ENCODE measurements at regions of chr3 and their contacts with region 1.

Region 1: DNA sequence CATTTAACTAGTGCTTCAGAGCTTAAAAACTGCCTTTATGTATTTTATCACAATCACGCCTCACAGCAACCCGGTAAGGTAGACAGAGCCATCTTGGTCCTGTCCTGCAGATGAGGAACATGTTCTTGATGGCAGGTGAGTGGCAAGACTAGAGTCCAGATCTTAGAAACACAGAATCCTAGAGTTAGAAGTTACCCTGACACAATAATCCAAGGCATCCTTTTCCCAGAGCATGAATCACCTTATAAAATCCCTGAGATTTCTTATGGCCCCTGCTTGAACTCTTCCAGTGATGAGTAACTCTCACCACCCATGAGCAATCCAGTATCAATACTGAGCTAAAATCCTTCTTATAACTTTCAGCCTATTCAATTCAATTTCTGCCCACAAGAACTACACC is 16.9 kb downstream of the POPDC2 start:
- DNase-seq: no peak
- CTCF ChIP-seq: no peak

Region 2: GRCh38 chr3:119437691-119438258 is 205.8 kb before region 1 on chr3:
- CTCF ChIA-PET with region 1: no interaction called
- POLR2A ChIA-PET with region 1: no interaction called
- DNase-seq: no peak
- CTCF ChIP-seq: no peak

Region 3: DNA sequence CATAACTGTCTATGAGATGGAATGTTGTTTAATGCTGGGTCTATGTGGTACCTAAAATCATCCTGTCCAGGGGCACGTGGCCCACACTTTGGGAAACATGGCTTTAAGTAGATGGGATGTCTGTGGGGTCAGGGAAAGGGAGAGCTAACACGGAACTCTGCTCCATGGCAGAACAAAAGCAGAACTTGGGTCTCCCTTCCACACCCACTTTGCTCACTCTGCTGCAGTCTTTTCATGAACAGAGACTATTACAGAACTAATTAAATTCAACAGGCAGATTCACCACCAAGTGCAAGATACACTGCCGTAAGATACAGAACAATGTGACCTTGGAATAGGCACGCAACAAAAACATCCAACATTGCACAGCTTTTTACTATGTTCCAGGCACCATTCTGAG is 11.3 kb before region 1 on chr3:
- CTCF ChIA-PET with region 1: no interaction called
- POLR2A ChIA-PET with region 1: no interaction called
- DNase-seq: no peak
- CTCF ChIP-seq: no peak

Region 4: GRCh38 chr3:119662604-119663373 is 19.3 kb after region 1 on chr3:
- CTCF ChIA-PET with region 1: interaction called, 32 read pairs
- POLR2A ChIA-PET with region 1: no interaction called
- DNase-seq: no peak
- CTCF ChIP-seq: no peak